Naive thymus-derived CD4-positive, alpha-beta T cell (primary cell): ENCODE measurements at regions of chr17 and their contacts with region 1.

Region 1: DNA sequence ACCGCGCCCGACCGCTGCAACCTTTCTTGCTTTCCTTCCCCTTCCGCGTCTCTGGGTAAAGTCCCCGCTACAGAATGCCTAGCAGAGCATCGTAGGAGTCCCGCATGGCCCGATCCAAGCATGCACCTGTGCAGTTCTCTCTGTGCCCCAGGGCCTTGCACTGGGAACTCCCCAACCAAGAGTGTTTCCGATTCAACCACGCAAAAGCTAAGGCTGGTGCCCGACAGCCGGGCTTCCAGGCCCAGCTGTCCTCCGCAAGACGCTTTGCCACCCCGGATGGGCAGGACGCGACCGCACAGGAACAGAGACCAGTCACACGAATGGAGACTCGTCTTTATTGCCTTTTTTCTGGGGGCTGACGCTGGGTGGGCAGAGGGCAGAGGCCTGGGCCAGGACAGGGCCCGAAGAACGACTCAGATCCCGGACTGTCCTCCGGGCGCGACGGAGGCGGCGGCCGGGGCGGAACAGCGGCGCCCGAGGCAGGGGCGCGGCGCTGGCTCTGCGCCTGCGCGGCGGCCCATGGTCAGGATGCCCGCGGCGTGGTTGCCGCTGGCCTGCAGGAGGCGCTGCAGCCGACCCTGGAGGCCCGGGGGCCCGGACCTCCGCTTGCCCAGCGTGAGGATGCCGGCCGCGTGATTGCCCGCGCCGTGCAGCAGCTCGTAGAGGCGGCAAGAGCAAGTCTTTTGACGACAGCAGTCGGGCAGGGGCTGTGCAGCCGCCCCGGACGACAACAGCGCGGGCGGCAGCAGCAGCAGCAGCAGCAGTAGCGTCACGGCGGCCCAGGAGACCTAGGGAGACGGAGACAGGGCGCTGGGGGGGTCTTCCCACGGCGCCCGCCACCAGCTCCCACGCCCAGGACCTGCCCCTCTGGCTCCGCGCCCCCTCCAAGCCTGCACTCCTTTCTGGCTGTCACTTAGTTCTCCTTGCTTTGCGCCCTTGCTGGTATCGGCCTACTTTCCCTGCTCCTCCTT is 1.2 kb downstream of the HCRT start:
- DNase-seq: peak; percentile 54 to 92 (median 72)
- ATAC-seq: peak; percentile 78
- H3K4me3 ChIP-seq: peak overlapping the region; percentile 98
- H3K4me3 Mint-ChIP-seq: peak overlapping the region; percentile 85 to 95 (median 90)
- H3K27ac ChIP-seq: peak overlapping the region; percentile 81
- H3K27ac Mint-ChIP-seq: peak overlapping the region; percentile 69 to 94 (median 88)
- H3K4me1 ChIP-seq: peaks cover 15 to 38% of the 10 kb centered on the region in 2 donors
- H3K4me1 Mint-ChIP-seq: peaks cover 21 to 52% (median 41%) of the 10 kb centered on the region in 7 donors
- H3K27me3 ChIP-seq: no peaks in the 10 kb centered on the region
- H3K27me3 Mint-ChIP-seq: peaks cover 0 to 25% (median 8%) of the 10 kb centered on the region in 5 donors

Region 2: DNA sequence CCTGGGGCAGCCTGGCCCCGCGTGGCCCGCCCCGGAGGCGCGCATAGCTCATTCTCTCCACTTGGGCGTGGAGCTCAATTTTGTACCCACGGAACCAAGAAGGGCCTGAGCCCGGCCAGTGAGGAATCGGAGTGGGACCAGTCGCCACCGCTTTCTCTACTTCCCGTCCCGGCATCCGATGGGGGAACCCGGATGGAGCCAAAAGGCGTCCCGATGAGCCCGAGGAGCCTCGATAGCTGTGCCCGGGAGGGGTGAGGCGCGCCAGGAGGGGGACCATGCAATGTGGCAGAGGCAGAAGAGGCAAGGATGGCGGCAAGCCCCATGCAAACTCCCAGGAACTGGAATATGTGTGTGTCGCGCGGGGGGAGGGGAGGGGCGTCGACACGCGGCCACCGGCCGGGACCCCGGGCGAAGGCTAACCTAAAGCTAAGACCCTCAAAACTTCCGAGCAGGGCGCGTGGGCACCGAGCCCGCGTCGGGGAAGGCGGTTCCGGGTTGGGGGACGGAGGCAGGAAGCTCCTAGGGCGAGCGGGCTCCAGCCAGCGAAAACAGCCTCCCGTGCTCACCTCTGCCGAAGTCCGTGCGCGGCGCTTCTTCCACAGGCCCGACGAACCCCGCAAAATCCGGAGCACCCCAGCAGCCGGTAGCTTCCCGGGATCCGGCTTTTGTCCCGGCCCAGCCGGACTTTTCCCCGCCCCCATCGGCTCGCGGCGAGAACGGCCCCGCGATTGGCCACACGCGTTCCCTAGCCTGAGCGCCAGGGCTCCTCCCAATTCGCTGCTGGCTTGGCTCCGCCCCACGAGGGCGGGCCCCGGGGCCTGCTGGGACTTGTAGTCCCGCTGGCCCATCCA is 265.5 kb before region 1 on chr17 and contains the start of gene ACLY:
- CTCF ChIA-PET with region 1: no interaction called
- POLR2A ChIA-PET with region 1: no interaction called
- intact Hi-C with region 1: loop called in 1 of 2 experiments (anchors 5 kb)
- DNase-seq: peak; percentile 88 to 99 (median 92)
- ATAC-seq: peak; percentile 100
- H3K4me3 ChIP-seq: peak within 1 kb of the TSS; percentile 94
- H3K4me3 Mint-ChIP-seq: peak within 1 kb of the TSS; percentile 84 to 99 (median 89)
- H3K27ac ChIP-seq: peak within 1 kb of the TSS; percentile 79
- H3K27ac Mint-ChIP-seq: peak within 1 kb of the TSS; percentile 48 to 97 (median 78)
- H3K4me1 ChIP-seq: peaks cover 8 to 14% of the 10 kb centered on the region in 2 donors
- H3K4me1 Mint-ChIP-seq: peaks cover 29 to 48% (median 35%) of the 10 kb centered on the region in 7 donors
- H3K27me3 ChIP-seq: no peaks in the 10 kb centered on the region
- H3K27me3 Mint-ChIP-seq: no peaks in the 10 kb centered on the region
- total RNA-seq, gene ACLY: 59.2 to 154 (median 70.8) TPM

Region 3: GRCh38 chr17:42067351-42068091 is 116.5 kb before region 1 on chr17:
- CTCF ChIA-PET with region 1: no interaction called
- POLR2A ChIA-PET with region 1: no interaction called
- intact Hi-C with region 1: loop called in 1 of 2 experiments (anchors 2 kb)
- DNase-seq: peak; percentile 31 to 72 (median 58)
- ATAC-seq: peak; percentile 63
- H3K4me3 ChIP-seq: no peak overlapping the region
- H3K4me3 Mint-ChIP-seq: no peak overlapping the region
- H3K27ac ChIP-seq: no peak overlapping the region
- H3K27ac Mint-ChIP-seq: peak overlapping the region in 1 of 9 donors; percentile 36
- H3K4me1 ChIP-seq: peaks cover 7 to 30% of the 10 kb centered on the region in 2 donors
- H3K4me1 Mint-ChIP-seq: peaks cover 9 to 30% (median 23%) of the 10 kb centered on the region in 7 donors
- H3K27me3 ChIP-seq: peaks cover 0 to 2% of the 10 kb centered on the region in 2 donors
- H3K27me3 Mint-ChIP-seq: peaks cover 4 to 21% (median 11%) of the 10 kb centered on the region in 5 donors

Region 4: GRCh38 chr17:42120770-42121769 is 63.0 kb before region 1 on chr17 and contains the start of gene KAT2A:
- CTCF ChIA-PET with region 1: interaction called, 5 read pairs
- POLR2A ChIA-PET with region 1: no interaction called
- intact Hi-C with region 1: loop called (anchors 1 to 5 kb)
- DNase-seq: peak; percentile 48 to 80 (median 68)
- ATAC-seq: peak; percentile 92
- H3K4me3 ChIP-seq: peak within 1 kb of the TSS; percentile 56
- H3K4me3 Mint-ChIP-seq: peak within 1 kb of the TSS; percentile 58 to 85 (median 74)
- H3K27ac ChIP-seq: peak within 1 kb of the TSS; percentile 75
- H3K27ac Mint-ChIP-seq: peak within 1 kb of the TSS in 8 of 9 donors; percentile 31 to 79 (median 68)
- H3K4me1 ChIP-seq: peaks cover 4 to 15% of the 10 kb centered on the region in 2 donors
- H3K4me1 Mint-ChIP-seq: peaks cover 10 to 35% (median 21%) of the 10 kb centered on the region in 7 donors
- H3K27me3 ChIP-seq: no peaks in the 10 kb centered on the region
- H3K27me3 Mint-ChIP-seq: no peaks in the 10 kb centered on the region
- total RNA-seq, gene KAT2A: 39.6 to 71.1 (median 49.1) TPM

Region 5: DNA sequence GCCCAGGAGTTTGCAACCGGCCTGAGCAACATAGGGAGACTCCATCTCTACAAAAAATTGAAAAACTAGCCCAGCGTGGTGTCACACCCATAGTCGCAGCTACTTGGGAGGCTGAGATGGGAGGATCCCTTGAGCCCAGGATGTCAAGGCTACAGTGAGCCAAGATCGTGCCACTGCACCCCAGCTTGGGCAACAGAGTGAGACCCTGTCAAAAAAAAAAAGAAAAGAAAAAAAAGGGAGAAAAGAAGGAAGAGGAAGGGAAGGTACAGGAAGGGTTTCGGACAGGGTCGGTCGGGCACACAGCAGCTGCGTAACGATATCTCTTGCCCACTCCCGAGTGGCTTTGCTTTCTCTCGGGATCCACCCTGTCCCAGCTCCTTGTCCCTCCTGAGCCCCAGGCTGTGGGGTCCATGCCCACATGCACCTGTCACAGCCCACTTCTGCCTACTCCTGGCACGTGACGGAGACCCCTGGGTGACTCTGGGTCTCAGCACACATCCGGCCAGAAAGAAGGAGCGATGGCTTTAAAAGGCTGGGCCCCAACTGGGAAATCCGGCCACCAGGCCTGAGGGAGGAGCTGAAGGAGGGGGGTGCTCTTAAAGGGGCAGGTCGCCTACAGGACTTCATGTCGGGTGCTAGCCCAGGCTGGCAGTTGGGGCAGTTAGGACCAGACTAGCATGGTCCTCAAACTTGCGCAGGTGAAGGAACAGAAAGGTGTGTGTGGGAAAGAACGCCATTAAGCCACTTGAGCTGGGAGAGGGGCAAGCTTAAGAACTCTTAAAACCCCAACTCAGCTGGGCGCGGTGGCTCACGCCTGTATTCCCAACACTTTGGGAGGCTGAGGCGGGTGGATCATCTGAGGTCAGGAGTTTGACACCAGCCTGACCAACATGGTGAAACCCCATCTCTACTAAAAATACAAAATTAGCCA is 10.2 kb after region 1 on chr17 and contains the start of gene GHDC:
- CTCF ChIA-PET with region 1: interaction called, 5 read pairs
- POLR2A ChIA-PET with region 1: interaction called, 22 read pairs
- intact Hi-C with region 1: loop called (anchors 1 kb)
- DNase-seq: peak; percentile 48 to 83 (median 75)
- ATAC-seq: peak; percentile 94
- H3K4me3 ChIP-seq: peak within 1 kb of the TSS; percentile 98
- H3K4me3 Mint-ChIP-seq: peak within 1 kb of the TSS; percentile 93 to 99 (median 95)
- H3K27ac ChIP-seq: peak within 1 kb of the TSS; percentile 82
- H3K27ac Mint-ChIP-seq: peak within 1 kb of the TSS; percentile 86 to 94 (median 90)
- H3K4me1 ChIP-seq: peaks cover 4 to 19% of the 10 kb centered on the region in 2 donors
- H3K4me1 Mint-ChIP-seq: peaks cover 13 to 33% (median 23%) of the 10 kb centered on the region in 7 donors
- H3K27me3 ChIP-seq: no peaks in the 10 kb centered on the region
- H3K27me3 Mint-ChIP-seq: no peaks in the 10 kb centered on the region
- total RNA-seq, gene GHDC: 15.5 to 29.8 (median 19.9) TPM

Region 6: GRCh38 chr17:42241871-42242270 is 57.8 kb after region 1 on chr17:
- CTCF ChIA-PET with region 1: no interaction called
- POLR2A ChIA-PET with region 1: no interaction called
- intact Hi-C with region 1: no loop called
- DNase-seq: no peak
- ATAC-seq: no peak
- H3K4me3 ChIP-seq: no peak overlapping the region
- H3K4me3 Mint-ChIP-seq: peak overlapping the region in 2 of 10 donors; percentile 21 to 31
- H3K27ac ChIP-seq: no peak overlapping the region
- H3K27ac Mint-ChIP-seq: peak overlapping the region in 7 of 9 donors; percentile 14 to 69 (median 48)
- H3K4me1 ChIP-seq: peaks cover 6 to 13% of the 10 kb centered on the region in 2 donors
- H3K4me1 Mint-ChIP-seq: peaks cover 29 to 77% (median 60%) of the 10 kb centered on the region in 7 donors
- H3K27me3 ChIP-seq: no peaks in the 10 kb centered on the region
- H3K27me3 Mint-ChIP-seq: no peaks in the 10 kb centered on the region

Region 7: DNA sequence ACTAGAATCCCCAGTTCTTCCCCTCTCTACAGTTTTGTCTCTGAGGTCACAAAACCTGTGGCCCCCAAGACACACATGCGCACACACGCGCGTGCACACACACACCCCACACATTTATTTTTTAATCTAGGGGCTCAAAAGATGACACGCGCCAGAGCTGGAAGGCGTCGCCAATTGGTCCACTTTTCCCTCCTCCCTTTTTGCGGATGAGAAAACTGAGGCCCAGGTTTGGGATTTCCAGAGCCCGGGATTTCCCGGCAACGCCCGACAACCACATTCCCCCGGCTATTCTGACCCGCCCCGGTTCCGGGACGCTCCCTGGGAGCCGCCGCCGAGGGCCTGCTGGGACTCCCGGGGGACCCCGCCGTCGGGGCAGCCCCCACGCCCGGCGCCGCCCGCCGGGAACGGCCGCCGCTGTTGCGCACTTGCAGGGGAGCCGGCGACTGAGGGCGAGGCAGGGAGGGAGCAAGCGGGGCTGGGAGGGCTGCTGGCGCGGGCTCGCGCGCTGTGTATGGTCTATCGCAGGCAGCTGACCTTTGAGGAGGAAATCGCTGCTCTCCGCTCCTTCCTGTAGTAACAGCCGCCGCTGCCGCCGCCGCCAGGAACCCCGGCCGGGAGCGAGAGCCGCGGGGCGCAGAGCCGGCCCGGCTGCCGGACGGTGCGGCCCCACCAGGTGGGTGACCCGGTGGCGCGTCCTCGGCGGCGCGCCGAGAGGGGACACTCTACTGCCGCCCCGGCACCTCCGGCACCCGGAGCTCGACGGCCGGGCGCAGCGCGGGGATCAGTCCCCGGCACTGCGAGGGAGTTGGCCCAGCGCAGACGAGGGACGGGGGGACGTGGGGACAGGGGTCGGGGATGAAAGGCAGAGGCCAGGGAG is 104.1 kb after region 1 on chr17 and contains the start of gene STAT5A:
- CTCF ChIA-PET with region 1: no interaction called
- POLR2A ChIA-PET with region 1: interaction called, 3 read pairs
- intact Hi-C with region 1: loop called in 1 of 2 experiments (anchors 5 kb)
- DNase-seq: peak; percentile 58 to 83 (median 79)
- ATAC-seq: peak; percentile 90
- H3K4me3 ChIP-seq: peak within 1 kb of the TSS; percentile 88
- H3K4me3 Mint-ChIP-seq: peak within 1 kb of the TSS; percentile 87 to 97 (median 93)
- H3K27ac ChIP-seq: peak within 1 kb of the TSS; percentile 93
- H3K27ac Mint-ChIP-seq: peak within 1 kb of the TSS; percentile 93 to 99 (median 96)
- H3K4me1 ChIP-seq: peaks cover 18 to 24% of the 10 kb centered on the region in 2 donors
- H3K4me1 Mint-ChIP-seq: peaks cover 27 to 65% (median 54%) of the 10 kb centered on the region in 7 donors
- H3K27me3 ChIP-seq: no peaks in the 10 kb centered on the region
- H3K27me3 Mint-ChIP-seq: no peaks in the 10 kb centered on the region
- total RNA-seq, gene STAT5A: 111 to 162 (median 150) TPM